Heart right ventricle (tissue), 16 donors: ENCODE measurements at regions of chr15 and their contacts with region 1.

Region 1: DNA sequence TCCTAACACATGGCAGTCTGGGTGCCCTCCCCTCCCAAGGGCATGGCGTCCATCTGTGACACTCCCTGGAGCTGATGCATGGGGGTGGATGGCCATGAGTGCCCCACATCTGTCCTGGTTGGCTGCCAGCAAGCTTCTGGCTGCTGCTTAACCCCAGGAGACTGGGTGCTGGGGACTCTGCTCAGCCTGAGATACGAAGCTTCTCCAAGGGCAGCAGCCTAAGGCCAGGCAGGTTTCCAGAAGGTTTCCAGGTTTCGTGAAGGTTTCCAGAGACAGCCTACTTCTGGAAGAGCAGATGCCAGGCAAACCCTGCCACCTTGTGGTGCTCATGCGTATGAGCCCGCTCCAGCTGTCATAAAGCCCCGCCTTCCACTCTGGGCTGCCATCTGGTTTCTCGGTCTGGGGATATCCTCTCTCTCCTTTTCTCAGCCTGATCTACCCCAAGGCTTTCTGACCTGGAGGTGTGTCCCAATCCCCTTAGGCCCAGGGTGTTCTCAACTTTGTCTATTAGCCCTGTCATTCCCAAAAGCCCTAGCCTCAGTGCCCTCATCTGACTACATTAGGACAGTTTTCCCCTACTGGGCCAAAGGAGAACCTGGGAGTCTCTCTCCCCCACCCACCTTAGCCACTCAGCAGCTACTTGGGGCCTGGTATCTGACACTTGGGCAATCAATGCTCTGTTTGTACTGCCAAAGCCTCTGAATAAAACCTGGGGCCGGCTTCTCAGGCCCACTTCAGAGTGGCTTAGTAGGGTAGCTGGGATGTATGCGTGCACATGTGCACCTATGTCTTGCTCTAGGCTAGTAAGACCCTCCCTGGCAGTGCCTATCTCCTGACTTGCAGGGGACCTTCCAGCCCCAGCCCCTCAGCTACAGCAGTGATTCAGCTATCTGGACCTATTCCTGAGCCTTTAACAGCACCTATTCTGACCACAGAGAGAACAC is 12.0 kb downstream of the MRPL46 start:
- DNase-seq: peak; percentile 37 to 43
- ATAC-seq: peak; percentile 67 to 88 (median 80)
- H3K4me3 ChIP-seq: no peak overlapping the region
- H3K27ac ChIP-seq: peak overlapping the region in 2 of 10 donors; percentile 30 to 44
- H3K4me1 ChIP-seq: peaks cover 0 to 20% (median 10%) of the 10 kb centered on the region in 9 donors
- H3K27me3 ChIP-seq: peaks cover 0 to 1% (median 0%) of the 10 kb centered on the region in 7 donors
- CTCF ChIP-seq: peak; percentile 38 to 72 (median 59)

Region 2: GRCh38 chr15:88232801-88233201 is 222.3 kb before region 1 on chr15:
- intact Hi-C with region 1: no loop called
- DNase-seq: no peak
- ATAC-seq: no peak
- H3K4me3 ChIP-seq: no peak overlapping the region
- H3K27ac ChIP-seq: no peak overlapping the region
- H3K4me1 ChIP-seq: no peaks in the 10 kb centered on the region
- H3K27me3 ChIP-seq: peaks cover 0 to 12% (median 3%) of the 10 kb centered on the region in 7 donors
- CTCF ChIP-seq: no peak

Region 3: DNA sequence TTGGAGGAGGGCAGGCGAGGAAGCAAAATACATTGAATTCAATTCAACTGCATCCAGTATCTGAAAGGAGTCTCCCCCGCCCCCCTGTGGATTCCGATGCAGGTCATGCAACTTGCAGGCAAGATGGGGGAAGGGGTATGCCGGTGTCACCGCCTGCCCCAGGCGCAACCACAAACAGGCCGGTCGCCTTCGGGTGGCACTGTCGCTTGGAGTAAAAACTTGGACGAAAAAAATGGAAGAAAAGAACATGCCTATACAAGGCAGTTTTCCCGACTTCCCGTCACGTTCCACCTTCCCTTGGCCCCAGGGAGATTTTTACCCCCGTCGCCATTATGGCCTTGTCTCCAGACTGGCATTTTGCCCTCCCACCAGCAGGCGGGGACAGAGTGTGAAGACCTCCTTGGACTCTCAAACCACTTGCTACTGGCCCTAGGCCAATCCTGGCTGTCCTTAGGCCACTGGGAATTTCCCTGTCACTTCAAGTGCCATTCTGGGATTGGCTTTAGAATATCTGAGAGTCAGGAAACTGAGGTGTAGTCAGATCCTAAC is 197.0 kb before region 1 on chr15:
- intact Hi-C with region 1: loop called in 1 of 10 experiments (anchors 5 kb)
- DNase-seq: peak in 1 of 2 donors; percentile 37
- ATAC-seq: peak in 5 of 8 donors; percentile 13 to 61 (median 57)
- H3K4me3 ChIP-seq: peak overlapping the region in 8 of 10 donors; percentile 43 to 58 (median 54)
- H3K27ac ChIP-seq: peak overlapping the region in 1 of 10 donors; percentile 14
- H3K4me1 ChIP-seq: peaks cover 0 to 29% (median 14%) of the 10 kb centered on the region in 9 donors
- H3K27me3 ChIP-seq: peaks cover 4 to 72% (median 54%) of the 10 kb centered on the region in 7 donors
- CTCF ChIP-seq: peak in 6 of 9 donors; percentile 11 to 48 (median 36)

Region 4: GRCh38 chr15:88267720-88268333 is 187.3 kb before region 1 on chr15:
- intact Hi-C with region 1: loop called in 1 of 10 experiments (anchors 2 kb)
- DNase-seq: no peak
- ATAC-seq: no peak
- H3K4me3 ChIP-seq: no peak overlapping the region
- H3K27ac ChIP-seq: no peak overlapping the region
- H3K4me1 ChIP-seq: peaks cover 0 to 5% (median 0%) of the 10 kb centered on the region in 9 donors
- H3K27me3 ChIP-seq: peaks cover 0 to 15% (median 4%) of the 10 kb centered on the region in 7 donors
- CTCF ChIP-seq: no peak